ENCODE measurements at regions of chr1 and their contacts with region 1.

Region 1: DNA sequence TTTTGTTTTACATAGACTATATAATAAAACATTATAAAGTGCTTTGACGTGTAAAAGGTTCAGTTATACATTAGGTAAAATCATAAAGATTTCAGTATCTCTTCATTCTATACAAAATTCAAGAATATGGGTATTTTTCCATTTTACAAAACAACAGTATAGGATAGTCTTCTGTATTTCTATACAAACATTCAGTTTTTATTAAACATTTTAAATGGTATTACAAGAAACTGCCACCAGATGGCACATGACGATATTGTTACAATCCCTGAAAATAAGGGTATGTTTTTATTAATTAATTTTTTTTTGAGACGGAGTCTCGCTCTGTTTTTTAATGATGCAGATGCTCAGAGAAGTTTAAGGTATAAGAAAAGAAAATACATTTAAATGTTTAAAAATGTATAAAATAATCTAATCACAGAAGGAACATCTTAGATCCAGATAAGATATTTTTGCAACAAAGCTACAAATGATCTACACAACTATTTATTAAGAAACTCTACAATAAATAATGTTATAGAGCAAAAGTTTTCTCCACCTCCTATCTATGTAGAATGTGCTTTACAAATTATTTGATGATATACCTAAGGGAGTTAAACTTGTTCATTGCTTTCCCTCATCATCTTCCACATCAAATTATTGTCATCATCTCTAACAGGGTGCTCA is 23.5 kb upstream of the RSBN1 start:
- DNase-seq: no peak
- ATAC-seq: no peak

Region 2: GRCh38 chr1:113770031-113770430 is 65.7 kb before region 1 on chr1:
- intact Hi-C with region 1: no loop called
- DNase-seq: no peak
- ATAC-seq: no peak

Region 3: DNA sequence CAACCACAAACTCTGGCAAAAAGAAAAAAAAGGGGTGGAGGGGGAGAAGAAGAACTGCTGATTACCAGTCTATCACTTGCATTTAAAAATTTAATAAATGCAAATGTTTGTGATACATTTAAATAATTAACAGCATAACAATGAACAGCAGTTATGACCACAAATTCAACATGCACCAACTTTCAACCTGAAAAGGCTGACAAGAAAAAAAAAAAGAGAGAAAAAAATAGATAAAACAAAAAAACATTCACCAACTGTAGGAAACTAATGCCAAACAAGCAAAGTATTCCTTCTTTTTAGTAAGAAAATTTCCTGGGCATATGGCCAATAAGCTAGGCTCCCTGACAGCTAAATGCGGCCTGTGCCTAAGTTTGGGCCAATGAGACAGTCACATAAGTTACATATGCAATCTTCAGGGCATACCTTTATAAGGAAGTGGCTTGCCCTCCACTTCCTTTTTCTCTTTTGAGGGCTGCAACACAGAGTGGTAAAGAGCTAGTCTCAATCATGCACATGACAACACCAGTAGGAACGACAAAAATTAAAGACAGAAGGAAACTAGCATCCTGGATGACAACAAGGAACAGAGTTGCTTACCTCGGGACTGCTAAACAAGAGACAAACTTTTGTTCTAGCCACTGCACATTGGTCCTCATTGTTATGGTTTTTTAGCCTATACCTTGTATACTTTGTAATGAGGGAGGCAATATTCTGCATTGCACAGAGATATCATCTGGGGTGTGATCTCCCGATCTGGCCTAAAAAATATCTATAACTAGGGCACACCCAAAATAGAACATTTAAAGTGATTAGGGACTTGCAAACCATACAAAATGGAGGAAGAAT is 52.3 kb before region 1 on chr1:
- intact Hi-C with region 1: no loop called
- DNase-seq: no peak
- ATAC-seq: peak; percentile 82 to 85

Region 4: GRCh38 chr1:113871597-113872113 is 35.9 kb after region 1 on chr1 and contains the start of gene PTPN22:
- intact Hi-C with region 1: no loop called
- DNase-seq: peak; percentile 25
- ATAC-seq: peak; percentile 87 to 93
- total RNA-seq, gene PTPN22: 1.0 to 1.6 TPM

Region 5: GRCh38 chr1:113912594-113913311 is 77.0 kb after region 1 on chr1:
- intact Hi-C with region 1: loop called in 1 of 2 experiments (anchors 5 kb)
- DNase-seq: peak; percentile 41
- ATAC-seq: peak; percentile 92 to 95

Region 6: DNA sequence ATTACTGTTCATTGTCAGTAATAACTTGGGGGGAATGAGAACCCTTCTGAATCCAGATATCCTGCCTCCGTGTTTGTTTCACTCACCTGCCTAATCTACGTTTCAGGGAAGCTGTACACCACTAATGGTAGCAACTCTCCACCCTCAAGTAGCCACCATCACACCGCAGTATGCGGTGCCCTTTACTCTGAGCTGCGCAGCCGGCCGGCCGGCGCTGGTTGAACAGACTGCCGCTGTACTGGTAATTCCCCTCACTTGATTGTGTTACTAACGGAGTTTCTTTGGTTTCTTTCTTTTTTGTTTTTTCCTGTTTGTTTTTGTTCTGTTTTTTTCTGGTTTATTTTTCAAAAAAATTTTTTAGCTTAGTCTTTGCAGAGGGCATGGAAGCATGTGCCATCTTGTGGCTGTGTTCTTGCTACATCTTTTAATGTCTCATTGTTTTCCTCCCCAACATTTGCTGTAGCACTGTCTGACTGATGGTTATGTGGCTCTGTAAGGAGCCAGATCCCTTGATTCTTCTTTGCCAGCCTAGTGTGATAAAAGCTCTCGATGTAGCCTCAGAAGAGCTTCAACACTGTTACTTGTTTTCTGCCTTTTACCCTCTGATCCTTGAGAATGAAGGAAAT is 127.6 kb after region 1 on chr1:
- intact Hi-C with region 1: loop called in 1 of 2 experiments (anchors 10 kb)
- DNase-seq: no peak
- ATAC-seq: no peak

Region 7: DNA sequence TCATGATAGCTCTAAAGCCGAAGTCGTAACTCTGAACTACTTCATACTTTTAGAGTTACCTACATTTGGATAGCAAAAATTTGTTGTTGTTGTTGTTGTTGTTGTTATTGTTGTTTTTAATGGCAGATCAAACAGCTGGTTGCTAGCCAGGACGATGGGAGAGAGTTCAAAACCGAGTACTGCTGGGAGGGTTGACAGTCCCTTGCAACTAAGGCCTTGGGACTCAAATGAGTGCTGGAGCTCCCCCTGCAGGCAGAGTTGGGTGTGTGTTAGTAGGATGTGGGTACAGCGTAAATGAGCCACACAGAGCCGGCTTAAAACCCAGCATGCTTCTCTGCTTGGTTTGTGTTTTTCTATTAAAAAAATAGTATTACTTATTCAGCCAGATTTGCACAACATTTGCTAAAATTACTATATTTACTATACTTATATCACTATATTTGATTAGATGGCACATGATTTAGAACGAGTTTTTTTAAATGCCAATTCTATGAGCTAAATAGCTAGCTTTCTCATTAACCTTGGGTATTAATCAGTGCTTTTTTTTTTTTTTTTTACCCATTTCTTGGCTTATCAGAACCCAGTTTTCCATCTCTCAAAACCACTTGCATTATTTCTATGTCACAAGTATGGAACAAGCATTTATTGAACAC is 447.1 kb after region 1 on chr1:
- intact Hi-C with region 1: loop called in 1 of 2 experiments (anchors 5 kb)
- DNase-seq: peak; percentile 89
- ATAC-seq: peak; percentile 97 to 98

Measured in left cardiac atrium (tissue), 4 donors.